B cell (primary cell): ENCODE measurements at regions of chr1 and their contacts with region 1.

Region 1: GRCh38 chr1:229732061-229732460 is 106.0 kb downstream of the URB2 start:
- DNase-seq: no peak
- ATAC-seq: no peak
- H3K4me3 ChIP-seq: no peak overlapping the region
- H3K4me3 Mint-ChIP-seq: no peak overlapping the region
- H3K27ac ChIP-seq: no peak overlapping the region
- H3K27ac Mint-ChIP-seq: no peak overlapping the region
- H3K4me1 ChIP-seq: no peaks in the 10 kb centered on the region
- H3K4me1 Mint-ChIP-seq: no peaks in the 10 kb centered on the region
- H3K27me3 ChIP-seq: no peaks in the 10 kb centered on the region
- H3K27me3 Mint-ChIP-seq: peaks cover 31% of the 10 kb centered on the region
- CTCF ChIP-seq: no peak

Region 2: GRCh38 chr1:230292689-230293389 is 560.8 kb after region 1 on chr1:
- CTCF ChIA-PET with region 1: no interaction called
- POLR2A ChIA-PET with region 1: interaction called, 10 read pairs
- intact Hi-C with region 1: no loop called
- DNase-seq: no peak
- ATAC-seq: no peak
- H3K4me3 ChIP-seq: peak overlapping the region in 2 of 5 experiments; percentile 30 to 45
- H3K4me3 Mint-ChIP-seq: peak overlapping the region; percentile 65
- H3K27ac ChIP-seq: peak overlapping the region in 1 of 2 donors; percentile 66
- H3K27ac Mint-ChIP-seq: peak overlapping the region; percentile 84
- H3K4me1 ChIP-seq: peaks cover 45 to 49% of the 10 kb centered on the region in 2 donors
- H3K4me1 Mint-ChIP-seq: peaks cover 50% of the 10 kb centered on the region
- H3K27me3 ChIP-seq: no peaks in the 10 kb centered on the region
- H3K27me3 Mint-ChIP-seq: no peaks in the 10 kb centered on the region
- CTCF ChIP-seq: no peak